Activated naive CD4-positive, alpha-beta T cell treated with anti-CD3 and anti-CD28 coated beads for 36 hours (primary cell): ENCODE measurements at regions of chr2 and their contacts with region 1.

Region 1: GRCh38 chr2:71068218-71069035 is at the start of gene NAGK:
- DNase-seq: peak; percentile 96
- H3K4me3 Mint-ChIP-seq: peak within 1 kb of the TSS; percentile 95
- H3K27ac Mint-ChIP-seq: peak within 1 kb of the TSS; percentile 98
- H3K4me1 Mint-ChIP-seq: peaks cover 49% of the 10 kb centered on the region
- H3K27me3 Mint-ChIP-seq: no peaks in the 10 kb centered on the region
- total RNA-seq, gene NAGK: 33.2 to 38.3 TPM

Region 2: DNA sequence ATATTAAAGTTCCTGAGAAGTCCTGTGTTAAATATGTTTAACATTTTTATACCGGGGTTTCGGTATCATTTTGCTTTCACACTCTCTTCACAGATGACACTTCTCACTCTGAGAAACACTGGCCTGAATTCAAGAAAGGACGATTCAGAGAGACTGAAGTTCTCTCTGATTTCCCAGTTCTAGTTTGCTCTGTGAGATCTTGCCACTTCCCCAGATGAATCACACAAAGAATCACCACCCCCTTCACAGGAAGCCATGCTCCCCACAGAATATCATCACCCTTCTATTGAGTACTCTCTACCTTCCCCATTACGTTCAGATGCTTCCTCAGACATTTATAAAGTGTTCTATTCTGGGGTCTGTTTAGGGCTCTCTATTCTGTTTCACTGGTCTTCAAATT is 216.7 kb before region 1 on chr2:
- CTCF ChIA-PET with region 1: no interaction called
- intact Hi-C with region 1: loop called (anchors 1 kb)
- DNase-seq: peak; percentile 71
- H3K4me3 Mint-ChIP-seq: no peak overlapping the region
- H3K27ac Mint-ChIP-seq: peak overlapping the region; percentile 83
- H3K4me1 Mint-ChIP-seq: peaks cover 28% of the 10 kb centered on the region
- H3K27me3 Mint-ChIP-seq: no peaks in the 10 kb centered on the region

Region 3: DNA sequence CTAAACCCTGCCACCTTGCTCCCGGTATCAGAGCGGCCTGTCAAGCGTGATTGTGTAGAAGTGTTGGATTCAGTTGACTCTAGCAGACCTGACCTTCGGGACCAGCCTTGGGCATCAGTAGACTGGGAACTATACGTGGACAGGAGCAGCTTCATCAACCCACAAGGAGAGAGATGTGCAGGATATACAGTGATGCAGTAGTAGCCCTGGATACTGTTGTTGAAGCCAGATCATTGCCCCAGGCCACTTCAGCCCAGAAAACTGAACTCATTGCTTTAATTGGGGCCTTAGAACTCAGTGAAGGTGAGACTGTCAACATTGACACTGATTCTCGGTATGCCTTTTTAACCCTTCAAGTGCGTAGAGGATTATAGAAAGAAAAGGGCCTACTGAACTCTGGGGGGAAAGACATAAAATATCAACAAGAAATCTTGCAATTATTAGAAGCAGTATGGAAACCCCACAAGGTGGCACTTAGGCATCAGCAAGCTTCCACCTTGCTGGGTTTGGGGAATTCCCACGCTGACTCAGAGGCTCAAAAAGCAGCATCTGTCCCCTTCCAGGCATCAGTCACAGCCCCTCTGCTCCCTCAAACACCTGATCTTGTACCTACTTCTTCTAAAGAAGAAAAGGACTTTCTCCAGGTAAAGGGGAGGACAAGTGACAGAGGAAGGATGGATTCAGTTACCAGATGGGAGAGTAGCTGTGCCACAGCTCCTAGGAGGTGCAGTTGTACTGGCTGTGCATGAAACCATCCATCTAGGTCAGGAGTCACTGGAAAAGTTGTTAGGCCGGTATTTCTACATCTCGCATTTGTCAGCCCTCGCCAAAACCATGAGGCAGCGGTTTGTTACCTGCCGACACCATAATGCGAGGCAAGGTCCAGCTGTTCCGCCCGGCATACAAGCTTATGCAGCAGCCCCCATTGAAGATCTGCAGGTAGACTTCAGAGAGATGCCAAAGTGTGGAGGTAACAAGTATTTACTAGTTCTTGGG is 18.8 kb before region 1 on chr2:
- CTCF ChIA-PET with region 1: interaction called, 18 read pairs
- intact Hi-C with region 1: loop called (anchors 1 kb)
- DNase-seq: peak; percentile 88
- H3K4me3 Mint-ChIP-seq: no peak overlapping the region
- H3K27ac Mint-ChIP-seq: no peak overlapping the region
- H3K4me1 Mint-ChIP-seq: peaks cover 13% of the 10 kb centered on the region
- H3K27me3 Mint-ChIP-seq: no peaks in the 10 kb centered on the region

Region 4: DNA sequence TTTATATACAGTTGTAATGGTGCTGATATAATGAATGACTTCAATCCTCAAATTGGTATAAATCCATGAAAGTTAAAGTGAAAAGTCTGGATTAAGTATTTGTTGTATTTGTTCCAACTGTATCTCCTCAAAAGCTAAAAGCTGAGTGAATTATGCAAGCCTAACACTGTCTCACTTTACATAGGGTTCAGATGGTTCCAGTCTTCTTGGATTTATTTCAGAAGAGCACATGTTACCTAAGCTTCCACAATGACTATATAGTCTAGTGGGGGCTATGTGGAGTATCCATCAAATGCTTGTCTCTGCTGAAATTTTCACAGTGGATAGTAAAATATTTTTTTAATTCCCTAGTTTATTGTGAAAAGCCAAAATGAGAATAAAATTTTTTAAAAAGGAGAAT is 48.6 kb after region 1 on chr2:
- CTCF ChIA-PET with region 1: interaction called, 3 read pairs
- intact Hi-C with region 1: loop called (anchors 5 kb)
- DNase-seq: no peak
- H3K4me3 Mint-ChIP-seq: no peak overlapping the region
- H3K27ac Mint-ChIP-seq: no peak overlapping the region
- H3K4me1 Mint-ChIP-seq: peaks cover 3% of the 10 kb centered on the region
- H3K27me3 Mint-ChIP-seq: no peaks in the 10 kb centered on the region

Region 5: DNA sequence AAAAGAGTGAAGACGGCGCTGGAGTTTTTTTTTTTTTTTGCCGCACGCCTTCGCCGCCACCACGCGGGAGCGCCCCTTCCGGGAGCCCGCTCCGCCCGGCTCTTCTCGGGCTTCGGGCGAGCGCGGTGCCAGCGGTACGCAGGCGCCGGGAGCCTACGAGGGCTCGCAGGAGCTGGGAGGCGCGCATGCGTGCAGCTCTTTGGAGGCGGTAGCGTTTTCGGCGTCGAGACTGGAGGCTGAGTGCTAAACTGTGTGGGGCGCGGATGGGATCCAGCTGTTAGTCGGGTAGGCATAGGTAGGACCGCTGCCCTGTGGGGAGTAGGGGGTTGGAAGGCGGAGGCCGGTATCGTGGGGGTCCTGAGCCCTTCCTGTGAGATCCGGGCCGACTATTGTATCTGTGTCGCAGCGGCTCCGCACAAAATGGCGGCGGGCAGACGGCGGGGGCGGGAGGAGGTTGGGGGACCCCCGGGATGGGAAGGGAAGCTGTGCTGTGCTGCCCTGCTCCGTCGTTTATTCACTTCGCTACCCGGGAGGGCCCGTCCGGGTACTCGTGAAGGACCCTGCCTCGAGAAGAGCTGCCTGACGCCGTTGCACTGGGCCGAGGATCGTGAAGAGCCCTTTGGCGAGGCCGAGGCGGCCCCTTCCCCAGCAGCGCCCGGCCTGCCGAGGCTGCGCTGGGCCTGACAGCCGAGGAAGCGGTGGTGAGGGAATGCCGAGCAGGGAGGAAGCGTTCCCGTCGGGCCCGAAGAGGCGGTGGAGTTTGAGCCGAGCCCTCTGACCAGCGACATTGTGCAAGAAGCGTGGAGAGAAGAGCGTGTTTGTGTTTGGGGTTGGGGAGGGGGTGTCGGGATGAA is 263.4 kb after region 1 on chr2 and contains the start of gene ZNF638:
- CTCF ChIA-PET with region 1: interaction called, 4 read pairs
- intact Hi-C with region 1: loop called (anchors 1 kb)
- DNase-seq: peak; percentile 93
- H3K4me3 Mint-ChIP-seq: peak within 1 kb of the TSS; percentile 99
- H3K27ac Mint-ChIP-seq: peak within 1 kb of the TSS; percentile 98
- H3K4me1 Mint-ChIP-seq: peaks cover 37% of the 10 kb centered on the region
- H3K27me3 Mint-ChIP-seq: no peaks in the 10 kb centered on the region
- total RNA-seq, gene ZNF638: 79.8 to 84.0 TPM

Region 6: DNA sequence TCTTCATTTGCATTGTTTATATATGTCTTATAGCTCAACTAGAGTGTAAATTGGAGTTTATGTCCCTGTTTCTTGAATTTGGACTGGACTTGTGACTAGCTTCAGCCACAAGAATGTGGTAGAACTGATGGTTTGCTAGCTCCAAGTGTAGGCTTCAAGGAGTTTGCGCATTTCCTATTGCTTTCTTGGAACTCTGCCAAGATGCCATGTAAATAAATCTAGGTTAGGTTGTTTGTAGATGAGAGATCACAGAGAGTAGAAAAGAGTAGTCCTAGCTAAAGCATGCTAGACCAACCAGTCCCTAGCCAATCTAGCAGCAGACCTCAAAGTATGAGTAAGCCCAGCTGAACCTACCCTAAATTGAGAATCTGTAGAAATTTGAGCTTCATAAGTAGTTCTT is 1262.2 kb after region 1 on chr2:
- CTCF ChIA-PET with region 1: no interaction called
- intact Hi-C with region 1: no loop called
- DNase-seq: no peak
- H3K4me3 Mint-ChIP-seq: no peak overlapping the region
- H3K27ac Mint-ChIP-seq: no peak overlapping the region
- H3K4me1 Mint-ChIP-seq: no peaks in the 10 kb centered on the region
- H3K27me3 Mint-ChIP-seq: no peaks in the 10 kb centered on the region